Ascending aorta (tissue), 2 donors: ENCODE measurements at regions of chr12 and their contacts with region 1.

Region 1: GRCh38 chr12:121712461-121713256 is at the start of gene TMEM120B:
- DNase-seq: peak; percentile 39 to 88
- H3K4me3 ChIP-seq: peak within 1 kb of the TSS; percentile 93 to 99
- H3K27ac ChIP-seq: peak within 1 kb of the TSS; percentile 80 to 93
- H3K4me1 ChIP-seq: peaks cover 6 to 16% of the 10 kb centered on the region in 2 donors
- H3K27me3 ChIP-seq: no peaks in the 10 kb centered on the region
- CTCF ChIP-seq: no peak
- total RNA-seq, gene TMEM120B: 9.7 TPM

Region 2: DNA sequence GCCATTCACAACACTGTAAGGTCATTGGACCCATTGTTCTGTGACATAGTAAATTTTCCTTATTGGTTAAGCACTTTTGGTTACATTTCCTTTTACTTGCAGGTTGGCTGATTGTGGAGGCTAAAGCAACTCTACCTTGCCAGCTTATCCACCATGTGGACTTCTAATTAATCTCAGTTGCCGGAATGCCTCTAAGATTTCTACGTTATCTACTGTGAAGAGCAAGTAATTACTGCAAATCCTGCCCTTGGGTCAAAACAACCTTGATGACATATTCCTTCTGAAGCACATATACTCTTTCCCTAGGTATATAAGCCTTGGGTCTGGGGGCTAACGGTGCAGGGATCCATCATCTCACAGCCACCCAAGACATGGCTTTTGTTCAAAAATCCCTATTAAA is 23.7 kb before region 1 on chr12:
- intact Hi-C with region 1: loop called (anchors 2 kb)
- DNase-seq: no peak
- H3K4me3 ChIP-seq: no peak overlapping the region
- H3K27ac ChIP-seq: no peak overlapping the region
- H3K4me1 ChIP-seq: peaks cover 0 to 7% of the 10 kb centered on the region in 2 donors
- H3K27me3 ChIP-seq: no peaks in the 10 kb centered on the region
- CTCF ChIP-seq: no peak

Region 3: DNA sequence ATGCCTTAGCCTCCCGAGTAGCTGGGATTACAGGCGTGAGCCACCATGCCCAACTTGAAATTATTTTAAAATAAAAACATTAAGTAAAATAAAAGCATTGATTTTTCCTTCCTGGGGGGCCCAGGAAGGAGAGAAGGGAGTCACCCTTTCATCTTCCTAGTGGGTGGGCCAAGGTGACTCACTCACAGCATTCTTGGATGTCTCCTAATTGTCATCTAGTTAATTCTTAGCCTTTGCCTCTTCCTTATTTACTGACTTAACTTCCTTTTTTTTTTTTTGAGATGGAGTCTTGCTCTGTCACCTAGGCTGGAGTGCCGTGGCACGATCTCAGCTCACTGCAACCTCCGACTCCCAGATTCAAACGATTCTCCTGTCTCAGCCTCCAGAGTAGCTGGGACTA is 29.1 kb after region 1 on chr12:
- intact Hi-C with region 1: loop called (anchors 2 kb)
- DNase-seq: no peak
- H3K4me3 ChIP-seq: no peak overlapping the region
- H3K27ac ChIP-seq: peak overlapping the region; percentile 47 to 77
- H3K4me1 ChIP-seq: peaks cover 0 to 7% of the 10 kb centered on the region in 2 donors
- H3K27me3 ChIP-seq: no peaks in the 10 kb centered on the region
- CTCF ChIP-seq: no peak

Region 4: GRCh38 chr12:121767525-121768016 is 54.9 kb after region 1 on chr12:
- intact Hi-C with region 1: loop called (anchors 2 kb)
- DNase-seq: peak in 1 of 2 donors; percentile 79
- H3K4me3 ChIP-seq: peak overlapping the region in 1 of 2 donors; percentile 14
- H3K27ac ChIP-seq: peak overlapping the region; percentile 54 to 59
- H3K4me1 ChIP-seq: peaks cover 4 to 21% of the 10 kb centered on the region in 2 donors
- H3K27me3 ChIP-seq: no peaks in the 10 kb centered on the region
- CTCF ChIP-seq: no peak

Region 5: DNA sequence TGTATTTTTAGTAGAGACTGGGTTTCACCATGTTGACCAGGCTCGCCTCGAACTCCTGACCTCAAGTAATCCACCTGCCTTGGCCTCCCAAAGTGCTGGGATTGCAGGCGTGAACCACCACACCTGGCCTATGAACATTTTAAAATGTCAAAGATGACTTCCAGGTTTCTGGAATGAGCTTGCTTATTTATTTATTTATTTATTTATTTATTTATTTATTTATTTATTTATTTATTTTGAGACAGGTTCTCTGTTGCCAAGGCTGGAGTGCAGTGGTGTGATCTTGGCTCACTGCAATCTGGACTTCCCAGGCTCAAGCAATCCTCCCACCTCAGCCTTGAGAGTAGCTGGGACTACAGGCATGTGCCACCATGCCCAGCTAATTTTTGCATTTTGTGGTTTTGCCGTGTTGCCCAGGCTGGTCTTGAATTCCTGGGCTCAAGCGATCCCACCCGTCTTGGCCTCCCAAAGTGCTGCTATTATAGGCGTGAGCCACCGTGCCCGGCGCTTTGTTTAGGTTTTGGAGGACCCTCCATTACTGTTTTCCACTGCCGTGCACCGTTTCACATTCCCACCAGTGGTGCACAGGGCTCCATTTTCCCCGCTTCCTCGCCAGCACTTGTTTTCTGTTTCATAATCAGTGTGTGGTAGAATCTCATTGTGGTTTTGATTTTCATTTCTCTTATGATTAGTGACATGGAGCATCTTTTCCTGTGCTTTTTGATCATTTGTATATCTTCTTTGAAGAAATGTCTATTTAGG is 199.3 kb after region 1 on chr12:
- intact Hi-C with region 1: no loop called
- DNase-seq: no peak
- H3K4me3 ChIP-seq: no peak overlapping the region
- H3K27ac ChIP-seq: no peak overlapping the region
- H3K4me1 ChIP-seq: peaks cover 0 to 5% of the 10 kb centered on the region in 2 donors
- H3K27me3 ChIP-seq: no peaks in the 10 kb centered on the region
- CTCF ChIP-seq: no peak